Tibial artery (tissue), 4 donors: ENCODE measurements at regions of chr2 and their contacts with region 1.

Region 1: GRCh38 chr2:179435000-179435399 is 170.4 kb upstream of the SESTD1 start:
- DNase-seq: no peak
- H3K4me3 ChIP-seq: no peak overlapping the region
- H3K27ac ChIP-seq: no peak overlapping the region
- H3K4me1 ChIP-seq: no peaks in the 10 kb centered on the region
- H3K27me3 ChIP-seq: no peaks in the 10 kb centered on the region
- CTCF ChIP-seq: no peak

Region 2: GRCh38 chr2:178498137-178498536 is 936.9 kb before region 1 on chr2:
- intact Hi-C with region 1: no loop called
- DNase-seq: no peak
- H3K4me3 ChIP-seq: no peak overlapping the region
- H3K27ac ChIP-seq: no peak overlapping the region
- H3K4me1 ChIP-seq: no peaks in the 10 kb centered on the region
- H3K27me3 ChIP-seq: no peaks in the 10 kb centered on the region
- CTCF ChIP-seq: no peak

Region 3: GRCh38 chr2:179513181-179513580 is 78.2 kb after region 1 on chr2:
- intact Hi-C with region 1: no loop called
- DNase-seq: no peak
- H3K4me3 ChIP-seq: no peak overlapping the region
- H3K27ac ChIP-seq: no peak overlapping the region
- H3K4me1 ChIP-seq: no peaks in the 10 kb centered on the region
- H3K27me3 ChIP-seq: no peaks in the 10 kb centered on the region
- CTCF ChIP-seq: no peak

Region 4: GRCh38 chr2:179749210-179749609 is 314.2 kb after region 1 on chr2:
- intact Hi-C with region 1: loop called (anchors 10 kb)
- DNase-seq: no peak
- H3K4me3 ChIP-seq: no peak overlapping the region
- H3K27ac ChIP-seq: no peak overlapping the region
- H3K4me1 ChIP-seq: no peaks in the 10 kb centered on the region
- H3K27me3 ChIP-seq: no peaks in the 10 kb centered on the region
- CTCF ChIP-seq: no peak